GM12878 (cell line): ENCODE measurements at regions of chr1 and their contacts with region 1.

Region 1: GRCh38 chr1:24955161-24955560 is 25.1 kb upstream of the RUNX3 start:
- DNase-seq: no peak
- ATAC-seq: peak; percentile 57
- H3K4me3 ChIP-seq: peak overlapping the region; percentile 52
- H3K27ac ChIP-seq: peak overlapping the region; percentile 76
- H3K4me1 ChIP-seq: peaks cover 92% of the 10 kb centered on the region
- H3K27me3 ChIP-seq: no peaks in the 10 kb centered on the region
- CTCF ChIP-seq: no peak
- EP300 ChIP-seq: no peak
- POLR2A ChIP-seq: no peak; the same call in 1 of the 2 replicates
- RAD21 ChIP-seq: no peak

Region 2: DNA sequence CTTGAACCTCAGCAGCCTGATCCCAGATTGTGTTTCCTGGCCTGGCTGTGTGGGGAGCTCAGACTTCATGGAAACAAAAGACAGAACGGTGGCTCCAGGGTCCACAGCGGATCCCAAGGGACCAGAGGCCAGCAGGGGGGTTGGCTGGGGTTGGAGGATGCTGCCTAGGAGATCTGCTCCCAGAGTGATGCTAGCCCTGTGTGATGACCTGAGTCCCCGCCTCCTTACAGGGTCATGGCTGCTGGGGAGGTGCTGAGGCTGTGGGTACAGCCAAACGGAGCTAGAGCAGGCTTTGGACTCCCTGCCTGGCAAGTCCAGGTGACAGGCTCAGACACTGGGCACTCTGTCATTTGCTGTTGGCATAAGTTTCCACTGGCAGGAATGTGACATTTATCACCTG is 13.6 kb before region 1 on chr1:
- CTCF ChIA-PET with region 1: interaction called, 314 read pairs
- POLR2A ChIA-PET with region 1: interaction called, 14 read pairs
- RAD21 ChIA-PET with region 1: interaction called, 99 read pairs
- SMC1A ChIA-PET with region 1: interaction called, 391 read pairs
- in situ Hi-C with region 1: no loop called
- intact Hi-C with region 1: no loop called
- DNase-seq: no peak
- ATAC-seq: peak; percentile 12
- H3K4me3 ChIP-seq: no peak overlapping the region
- H3K27ac ChIP-seq: no peak overlapping the region
- H3K4me1 ChIP-seq: peaks cover 18% of the 10 kb centered on the region
- H3K27me3 ChIP-seq: no peaks in the 10 kb centered on the region
- CTCF ChIP-seq: no peak
- EP300 ChIP-seq: no peak
- POLR2A ChIP-seq: 0 out of 2 replicates have a peak, but pooled peaks have one; percentile 46
- RAD21 ChIP-seq: no peak

Region 3: DNA sequence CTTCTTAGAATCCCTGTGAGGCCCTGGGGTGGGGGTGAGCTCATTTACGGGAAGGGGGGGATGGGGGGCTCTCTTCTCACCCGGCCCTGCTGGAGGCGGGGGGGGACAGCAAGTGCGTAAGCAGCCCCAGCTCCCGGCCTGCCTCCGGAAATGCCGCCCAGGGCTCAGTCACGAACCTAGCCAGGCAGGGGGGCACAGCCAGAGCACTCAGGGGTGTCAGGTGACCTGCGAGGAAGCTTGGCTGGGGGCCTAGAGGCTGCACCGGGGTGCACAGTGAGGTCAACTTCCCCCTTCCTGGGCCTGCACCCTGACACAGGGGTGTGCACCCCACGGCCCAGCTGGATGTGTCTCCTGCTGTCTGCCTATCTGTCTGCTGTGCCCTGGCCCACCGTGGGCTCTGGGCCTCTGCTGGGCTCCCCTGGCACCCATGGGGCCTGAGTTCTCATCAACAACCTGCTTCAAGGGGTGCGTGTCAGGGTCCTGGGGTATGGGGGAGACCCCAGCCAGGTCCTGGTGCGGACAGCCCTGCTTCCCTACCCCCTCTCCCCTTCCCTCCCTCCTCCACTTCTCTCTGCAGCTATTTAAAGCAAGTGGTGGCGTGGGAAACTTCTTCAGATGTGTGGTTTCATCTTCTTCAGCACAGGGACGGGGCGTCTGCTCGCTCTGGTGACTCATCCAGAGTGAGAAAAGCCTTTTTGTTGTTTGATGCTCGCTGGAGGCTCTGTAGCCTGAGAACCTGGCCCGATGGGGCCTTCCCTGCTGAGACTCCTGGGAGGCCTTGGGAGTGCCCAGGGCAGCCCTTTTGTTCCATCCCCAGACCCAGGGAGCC is 67.4 kb after region 1 on chr1:
- CTCF ChIA-PET with region 1: interaction called, 152 read pairs
- POLR2A ChIA-PET with region 1: interaction called, 220 read pairs
- RAD21 ChIA-PET with region 1: interaction called, 148 read pairs
- SMC1A ChIA-PET with region 1: interaction called, 205 read pairs
- in situ Hi-C with region 1: no loop called
- intact Hi-C with region 1: no loop called
- DNase-seq: peak; percentile 97
- ATAC-seq: peak; percentile 85
- H3K4me3 ChIP-seq: peak overlapping the region; percentile 56
- H3K27ac ChIP-seq: peak overlapping the region; percentile 100
- H3K4me1 ChIP-seq: peaks cover 94% of the 10 kb centered on the region
- H3K27me3 ChIP-seq: no peaks in the 10 kb centered on the region
- CTCF ChIP-seq: no peak
- EP300 ChIP-seq: peak; percentile 96 to 97
- POLR2A ChIP-seq: no peak
- RAD21 ChIP-seq: peak; percentile 34